Ovary (tissue), 10 donors: ENCODE measurements at regions of chr10 and their contacts with region 1.

Region 1: DNA sequence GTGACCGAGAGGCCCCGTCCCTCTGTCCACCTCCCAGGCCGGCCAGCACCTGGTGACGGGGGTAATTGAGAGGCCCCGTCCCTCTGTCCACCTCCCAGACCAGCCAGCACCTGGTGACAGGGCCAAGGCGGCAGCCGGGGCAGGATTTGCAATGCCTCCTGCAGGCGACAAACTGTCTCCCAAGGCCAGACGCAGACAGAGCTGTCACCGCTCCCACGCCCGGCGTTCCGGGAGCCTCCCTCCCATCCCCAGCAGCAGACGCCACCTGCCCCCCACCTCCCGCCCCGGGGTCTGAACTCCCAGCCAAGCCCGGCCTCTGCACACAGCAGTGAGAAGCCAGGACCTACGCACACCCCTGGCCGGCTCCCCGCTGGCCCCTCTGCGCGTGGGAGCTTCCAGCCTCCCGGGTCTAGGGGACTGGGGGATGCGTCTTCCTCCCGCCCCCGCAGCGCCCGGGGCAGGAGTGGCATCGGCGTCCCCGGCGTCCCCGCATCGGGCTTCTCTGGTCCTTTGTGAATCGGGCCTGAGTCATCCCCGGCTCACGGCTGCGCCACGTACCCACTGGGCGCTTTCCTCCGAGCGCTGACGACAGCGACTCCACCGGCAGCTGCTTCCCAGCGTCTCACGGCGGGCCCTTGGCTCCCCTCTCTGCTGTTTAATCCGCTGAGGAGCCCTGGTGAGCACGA is 95.1 kb upstream of the DIP2C start:
- DNase-seq: peak in 4 of 5 donors; percentile 41 to 63 (median 52)
- H3K4me3 ChIP-seq: peak overlapping the region; percentile 28
- H3K27ac ChIP-seq: no peak overlapping the region
- H3K4me1 ChIP-seq: peaks cover 3% of the 10 kb centered on the region
- H3K27me3 ChIP-seq: no peaks in the 10 kb centered on the region
- CTCF ChIP-seq: no peak
- EP300 ChIP-seq: no peak
- POLR2A ChIP-seq: no peak

Region 2: DNA sequence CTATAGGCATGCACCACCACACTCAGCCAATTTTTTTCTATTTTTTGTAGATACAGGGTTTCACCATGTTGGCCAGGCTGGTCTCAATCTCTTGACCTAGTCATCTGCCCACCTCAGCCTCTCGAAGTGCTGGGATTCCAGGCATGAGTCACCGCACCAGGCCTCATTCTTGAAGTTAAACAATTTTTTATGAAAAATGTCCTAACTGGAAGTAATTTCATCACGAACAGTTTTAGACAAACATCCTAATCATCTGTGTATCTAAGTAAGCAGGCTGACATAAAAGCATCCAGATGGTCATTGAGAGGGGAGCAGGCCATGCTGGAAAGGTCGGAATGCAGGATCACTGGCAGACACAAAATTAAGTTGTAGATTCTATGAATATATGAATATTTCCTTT is 380.2 kb before region 1 on chr10:
- intact Hi-C with region 1: no loop called
- DNase-seq: no peak
- H3K4me3 ChIP-seq: no peak overlapping the region
- H3K27ac ChIP-seq: no peak overlapping the region
- H3K4me1 ChIP-seq: no peaks in the 10 kb centered on the region
- H3K27me3 ChIP-seq: no peaks in the 10 kb centered on the region
- CTCF ChIP-seq: no peak
- EP300 ChIP-seq: no peak
- POLR2A ChIP-seq: no peak

Region 3: GRCh38 chr10:511101-511848 is 273.3 kb before region 1 on chr10:
- intact Hi-C with region 1: loop called in 3 of 4 experiments (anchors 5 to 10 kb)
- DNase-seq: peak; percentile 88 to 95 (median 92)
- H3K4me3 ChIP-seq: no peak overlapping the region
- H3K27ac ChIP-seq: no peak overlapping the region
- H3K4me1 ChIP-seq: peaks cover 4% of the 10 kb centered on the region
- H3K27me3 ChIP-seq: no peaks in the 10 kb centered on the region
- CTCF ChIP-seq: peak; percentile 81 to 94 (median 94)
- EP300 ChIP-seq: no peak
- POLR2A ChIP-seq: no peak

Region 4: GRCh38 chr10:520406-520795 is 264.1 kb before region 1 on chr10:
- intact Hi-C with region 1: loop called in 2 of 4 experiments (anchors 5 to 10 kb)
- DNase-seq: peak in 4 of 5 donors; percentile 54 to 65 (median 58)
- H3K4me3 ChIP-seq: no peak overlapping the region
- H3K27ac ChIP-seq: no peak overlapping the region
- H3K4me1 ChIP-seq: peaks cover 9% of the 10 kb centered on the region
- H3K27me3 ChIP-seq: no peaks in the 10 kb centered on the region
- CTCF ChIP-seq: no peak
- EP300 ChIP-seq: no peak
- POLR2A ChIP-seq: no peak